ENCODE measurements at regions of chr4 and their contacts with region 1.

Region 1: GRCh38 chr4:113452868-113453620 is 308.5 kb downstream of the CAMK2D start:
- DNase-seq: no peak
- H3K4me3 Mint-ChIP-seq: no peak overlapping the region
- H3K27ac Mint-ChIP-seq: no peak overlapping the region
- H3K4me1 Mint-ChIP-seq: no peaks in the 10 kb centered on the region
- H3K27me3 Mint-ChIP-seq: no peaks in the 10 kb centered on the region
- CTCF ChIP-seq: no peak

Region 2: GRCh38 chr4:112253382-112254000 is 1199.6 kb before region 1 on chr4:
- CTCF ChIA-PET with region 1: no interaction called
- intact Hi-C with region 1: no loop called
- DNase-seq: no peak
- H3K4me3 Mint-ChIP-seq: no peak overlapping the region
- H3K27ac Mint-ChIP-seq: no peak overlapping the region
- H3K4me1 Mint-ChIP-seq: no peaks in the 10 kb centered on the region
- H3K27me3 Mint-ChIP-seq: no peaks in the 10 kb centered on the region
- CTCF ChIP-seq: no peak

Region 3: DNA sequence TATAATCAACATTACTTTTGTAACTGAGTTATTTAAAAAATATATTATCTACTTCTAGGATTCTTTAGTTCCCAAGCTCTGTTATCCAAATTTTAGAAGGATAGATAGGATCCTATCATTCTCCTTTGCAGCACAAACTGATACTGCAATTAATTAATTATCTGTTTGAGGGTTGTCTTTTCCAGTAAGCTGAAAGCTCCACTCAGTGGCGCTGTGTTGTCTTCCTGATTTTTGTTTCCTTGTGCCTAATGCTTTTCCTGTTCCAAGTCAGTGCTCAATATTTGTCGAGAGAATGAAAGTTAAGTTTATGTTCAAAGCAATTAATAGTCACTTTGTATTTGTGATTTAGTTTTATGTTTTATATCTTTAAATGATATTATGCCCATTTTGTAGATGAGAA is 511.0 kb before region 1 on chr4:
- CTCF ChIA-PET with region 1: no interaction called
- intact Hi-C with region 1: no loop called
- DNase-seq: no peak
- H3K4me3 Mint-ChIP-seq: no peak overlapping the region
- H3K27ac Mint-ChIP-seq: no peak overlapping the region
- H3K4me1 Mint-ChIP-seq: no peaks in the 10 kb centered on the region
- H3K27me3 Mint-ChIP-seq: no peaks in the 10 kb centered on the region
- CTCF ChIP-seq: no peak

Region 4: GRCh38 chr4:113300471-113300928 is 152.5 kb before region 1 on chr4:
- CTCF ChIA-PET with region 1: no interaction called
- intact Hi-C with region 1: no loop called
- DNase-seq: peak; percentile 21
- H3K4me3 Mint-ChIP-seq: no peak overlapping the region
- H3K27ac Mint-ChIP-seq: peak overlapping the region; percentile 75
- H3K4me1 Mint-ChIP-seq: peaks cover 8% of the 10 kb centered on the region
- H3K27me3 Mint-ChIP-seq: no peaks in the 10 kb centered on the region
- CTCF ChIP-seq: no peak

Region 5: DNA sequence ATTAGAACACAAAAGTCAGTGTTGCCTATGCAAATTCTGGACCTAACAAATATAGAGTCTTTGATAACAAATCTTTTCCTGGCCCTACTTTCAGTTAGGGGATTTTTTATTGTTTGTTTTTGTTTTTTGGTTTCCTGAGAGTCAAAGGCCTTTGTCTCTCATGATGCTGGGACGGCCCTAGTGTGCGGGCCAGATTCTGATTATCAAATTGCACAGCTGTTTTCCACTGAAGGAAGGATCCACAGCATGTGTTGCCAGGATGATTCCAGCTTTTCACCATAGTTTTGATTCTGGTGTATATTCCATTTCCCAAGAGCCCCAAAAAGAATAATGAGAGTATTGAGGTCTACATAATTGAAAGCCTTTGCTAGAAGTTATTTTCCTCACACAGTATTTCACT is 60.3 kb after region 1 on chr4:
- CTCF ChIA-PET with region 1: no interaction called
- intact Hi-C with region 1: loop called (anchors 10 kb)
- DNase-seq: no peak
- H3K4me3 Mint-ChIP-seq: no peak overlapping the region
- H3K27ac Mint-ChIP-seq: no peak overlapping the region
- H3K4me1 Mint-ChIP-seq: no peaks in the 10 kb centered on the region
- H3K27me3 Mint-ChIP-seq: no peaks in the 10 kb centered on the region
- CTCF ChIP-seq: no peak